ENCODE measurements at regions of chr11 and their contacts with region 1.

Region 1: DNA sequence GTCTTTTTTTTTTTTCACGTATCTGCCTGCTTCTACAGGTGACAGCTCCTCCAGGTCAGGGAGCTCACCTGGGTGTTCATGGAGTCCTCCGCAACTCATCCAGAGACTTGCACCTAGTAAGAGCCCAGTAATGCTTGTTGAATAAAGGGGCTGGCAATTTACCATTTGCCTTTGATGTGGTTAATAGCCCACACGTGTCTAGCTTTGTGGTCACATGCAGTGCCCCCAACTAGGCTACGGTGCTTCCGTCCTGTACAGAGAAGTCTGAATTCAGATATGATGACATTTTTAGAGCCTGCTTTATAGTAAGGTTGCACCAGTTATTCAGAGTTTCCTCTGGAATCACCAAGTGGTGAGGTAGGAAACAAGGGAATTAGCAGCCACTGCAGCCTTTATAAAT is 199.4 kb upstream of the MTMR2 start:
- DNase-seq: no peak
- ATAC-seq: no peak
- H3K4me3 ChIP-seq: no peak overlapping the region
- H3K27ac ChIP-seq: no peak overlapping the region
- H3K4me1 ChIP-seq: no peaks in the 10 kb centered on the region
- H3K27me3 ChIP-seq: no peaks in the 10 kb centered on the region
- CTCF ChIP-seq: no peak

Region 2: GRCh38 chr11:96063886-96064285 is 59.4 kb before region 1 on chr11:
- CTCF ChIA-PET with region 1: no interaction called
- POLR2A ChIA-PET with region 1: interaction called, 16 read pairs
- intact Hi-C with region 1: no loop called
- DNase-seq: no peak
- ATAC-seq: no peak
- H3K4me3 ChIP-seq: no peak overlapping the region
- H3K27ac ChIP-seq: no peak overlapping the region
- H3K4me1 ChIP-seq: peaks cover 38% of the 10 kb centered on the region
- H3K27me3 ChIP-seq: no peaks in the 10 kb centered on the region
- CTCF ChIP-seq: no peak

Region 3: GRCh38 chr11:96134602-96135001 is 11.3 kb after region 1 on chr11:
- CTCF ChIA-PET with region 1: no interaction called
- POLR2A ChIA-PET with region 1: no interaction called
- intact Hi-C with region 1: no loop called
- DNase-seq: no peak
- ATAC-seq: no peak
- H3K4me3 ChIP-seq: no peak overlapping the region
- H3K27ac ChIP-seq: no peak overlapping the region
- H3K4me1 ChIP-seq: peaks cover 12% of the 10 kb centered on the region
- H3K27me3 ChIP-seq: no peaks in the 10 kb centered on the region
- CTCF ChIP-seq: no peak

Measured in PC-3 (cell line).